CD4-positive, alpha-beta memory T cell (primary cell): ENCODE measurements at regions of chr2 and their contacts with region 1.

Region 1: DNA sequence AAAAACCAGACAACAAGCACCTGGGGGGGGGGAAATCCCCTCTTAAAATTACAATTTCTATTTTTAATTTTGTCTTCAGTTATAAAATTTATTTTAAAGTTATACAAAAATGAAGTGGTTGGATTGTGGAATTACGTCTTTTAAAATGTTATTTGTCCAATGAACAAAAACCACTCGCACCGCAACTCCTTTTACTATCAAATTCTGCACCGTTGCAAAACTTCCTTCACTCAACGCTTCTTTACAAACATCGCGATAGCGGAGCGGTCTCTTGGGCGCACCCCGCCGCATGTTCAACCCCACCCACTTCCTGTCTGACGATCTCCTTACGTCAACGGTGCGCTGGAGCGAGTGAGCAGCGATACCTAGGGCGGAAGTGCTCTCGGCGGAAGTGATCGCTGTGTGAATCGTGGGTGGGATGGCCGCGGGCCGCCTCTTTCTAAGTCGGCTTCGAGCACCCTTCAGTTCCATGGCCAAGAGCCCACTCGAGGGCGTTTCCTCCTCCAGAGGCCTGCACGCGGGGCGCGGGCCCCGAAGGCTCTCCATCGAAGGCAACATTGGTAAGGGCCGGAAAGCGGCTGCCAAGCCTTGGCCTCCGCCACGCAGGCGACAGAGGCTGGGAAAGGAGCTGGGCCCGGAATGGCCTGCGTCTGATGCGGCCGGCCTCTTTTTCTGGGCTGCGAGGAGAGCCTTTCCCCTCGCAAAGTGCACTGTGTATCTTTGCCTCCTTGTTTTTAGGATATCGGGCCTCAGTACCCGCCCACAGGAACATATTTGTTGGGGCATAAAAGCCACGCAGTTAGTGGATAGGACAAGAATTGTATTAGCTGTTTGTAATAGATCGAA is at the start of gene DGUOK:
- DNase-seq: peak; percentile 96 to 99 (median 98)
- H3K4me3 ChIP-seq: peak within 1 kb of the TSS; percentile 66 to 72
- H3K4me3 Mint-ChIP-seq: peak within 1 kb of the TSS; percentile 77 to 95 (median 92)
- H3K27ac ChIP-seq: peak within 1 kb of the TSS; percentile 97
- H3K27ac Mint-ChIP-seq: peak within 1 kb of the TSS; percentile 98 to 99 (median 99)
- H3K4me1 ChIP-seq: peaks cover 50% of the 10 kb centered on the region
- H3K4me1 Mint-ChIP-seq: peaks cover 38 to 55% (median 45%) of the 10 kb centered on the region in 4 donors
- H3K27me3 ChIP-seq: no peaks in the 10 kb centered on the region
- H3K27me3 Mint-ChIP-seq: no peaks in the 10 kb centered on the region
- total RNA-seq, gene DGUOK: 52.2 to 55.5 TPM

Region 2: DNA sequence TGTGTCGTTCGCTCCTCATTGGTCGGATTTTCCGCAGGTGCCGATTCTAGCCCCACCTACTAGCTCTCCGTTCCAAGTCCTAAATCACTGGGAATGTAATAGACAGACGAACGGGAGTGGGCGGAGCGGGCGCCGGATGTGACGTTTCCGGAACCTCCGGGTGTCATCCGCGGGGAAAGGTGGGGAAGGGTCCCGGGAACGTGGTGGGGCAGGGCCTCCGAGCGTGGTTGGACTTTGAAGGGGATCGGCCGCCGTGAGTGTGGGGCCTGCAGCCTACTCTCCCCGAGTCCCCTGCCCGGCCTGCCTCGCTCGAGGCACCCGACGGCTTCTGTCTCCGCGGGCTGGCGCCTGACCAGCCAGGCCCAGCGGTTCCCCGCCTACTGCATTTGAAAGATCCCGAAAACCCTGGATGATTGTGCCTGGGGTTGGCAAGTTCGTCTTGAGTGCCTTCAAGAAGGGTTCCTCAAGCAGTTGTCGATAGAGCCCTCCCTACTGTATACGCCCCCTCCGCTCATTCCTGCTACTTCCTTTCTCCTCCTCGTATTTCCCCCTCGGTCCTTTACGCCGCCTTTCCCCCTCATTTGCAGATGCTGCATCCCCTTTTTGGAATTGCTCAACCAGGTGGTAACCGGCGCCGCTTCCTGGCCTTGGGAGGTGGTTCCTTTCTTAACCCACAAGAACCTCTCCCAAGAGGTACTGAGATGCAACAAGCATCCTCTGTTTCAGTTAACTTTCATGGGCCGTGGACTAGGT is 97.7 kb before region 1 on chr2 and contains the start of gene STAMBP:
- CTCF ChIA-PET with region 1: no interaction called
- POLR2A ChIA-PET with region 1: interaction called, 4 read pairs
- intact Hi-C with region 1: loop called (anchors 1 kb)
- DNase-seq: peak; percentile 87 to 95 (median 91)
- H3K4me3 ChIP-seq: peak within 1 kb of the TSS; percentile 64 to 81
- H3K4me3 Mint-ChIP-seq: peak within 1 kb of the TSS; percentile 91 to 99 (median 96)
- H3K27ac ChIP-seq: peak within 1 kb of the TSS; percentile 92
- H3K27ac Mint-ChIP-seq: peak within 1 kb of the TSS; percentile 94 to 100 (median 98)
- H3K4me1 ChIP-seq: peaks cover 45% of the 10 kb centered on the region
- H3K4me1 Mint-ChIP-seq: peaks cover 34 to 49% (median 40%) of the 10 kb centered on the region in 4 donors
- H3K27me3 ChIP-seq: no peaks in the 10 kb centered on the region
- H3K27me3 Mint-ChIP-seq: no peaks in the 10 kb centered on the region
- total RNA-seq, gene STAMBP: 34.8 to 37.3 TPM

Region 3: DNA sequence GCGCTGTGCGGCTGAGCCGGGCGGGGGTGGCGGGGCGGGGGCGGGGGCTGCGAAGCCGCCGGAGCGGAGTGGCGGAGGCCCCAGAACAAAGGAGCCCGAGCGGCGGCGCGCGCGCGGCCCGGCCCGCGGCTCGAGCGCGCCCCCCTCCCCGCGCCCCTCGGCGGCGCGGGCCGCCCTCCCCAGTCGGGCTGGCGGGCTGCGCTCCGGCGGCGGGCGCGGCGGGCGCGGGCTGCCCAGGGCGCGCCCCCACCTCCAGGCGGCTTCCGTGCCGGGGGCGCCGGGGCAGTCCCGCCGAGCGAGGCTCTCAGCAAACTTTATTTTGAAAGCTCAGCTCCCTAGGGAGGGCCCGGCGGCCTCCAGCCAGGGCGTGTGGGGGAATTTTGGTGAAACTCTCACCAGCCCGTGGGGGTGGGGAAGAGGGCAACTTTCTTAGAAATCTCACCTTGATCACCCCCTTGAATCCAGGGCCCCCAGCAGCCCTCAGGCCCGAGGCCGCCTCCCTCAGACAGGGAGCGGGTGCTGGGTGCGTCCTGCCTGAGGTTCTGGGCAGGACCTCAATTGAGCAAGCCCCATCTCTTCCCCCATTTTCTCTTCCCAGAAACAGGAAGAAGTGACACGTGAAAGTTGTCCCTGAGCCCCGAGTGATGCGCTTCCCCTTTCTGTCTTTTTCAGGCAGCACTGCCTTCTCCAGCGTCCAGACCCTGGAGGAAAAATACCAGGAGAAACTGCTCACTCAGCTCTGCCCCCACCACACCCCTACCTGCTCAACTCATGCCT is 58.8 kb after region 1 on chr2:
- CTCF ChIA-PET with region 1: interaction called, 4 read pairs
- POLR2A ChIA-PET with region 1: interaction called, 27 read pairs
- intact Hi-C with region 1: loop called (anchors 1 kb)
- DNase-seq: peak in 4 of 5 donors; percentile 47 to 76 (median 52)
- H3K4me3 ChIP-seq: peak overlapping the region; percentile 52 to 73
- H3K4me3 Mint-ChIP-seq: peak overlapping the region; percentile 81 to 92 (median 84)
- H3K27ac ChIP-seq: peak overlapping the region; percentile 75
- H3K27ac Mint-ChIP-seq: peak overlapping the region; percentile 34 to 96 (median 87)
- H3K4me1 ChIP-seq: peaks cover 76% of the 10 kb centered on the region
- H3K4me1 Mint-ChIP-seq: peaks cover 59 to 85% (median 70%) of the 10 kb centered on the region in 4 donors
- H3K27me3 ChIP-seq: no peaks in the 10 kb centered on the region
- H3K27me3 Mint-ChIP-seq: no peaks in the 10 kb centered on the region

Region 4: DNA sequence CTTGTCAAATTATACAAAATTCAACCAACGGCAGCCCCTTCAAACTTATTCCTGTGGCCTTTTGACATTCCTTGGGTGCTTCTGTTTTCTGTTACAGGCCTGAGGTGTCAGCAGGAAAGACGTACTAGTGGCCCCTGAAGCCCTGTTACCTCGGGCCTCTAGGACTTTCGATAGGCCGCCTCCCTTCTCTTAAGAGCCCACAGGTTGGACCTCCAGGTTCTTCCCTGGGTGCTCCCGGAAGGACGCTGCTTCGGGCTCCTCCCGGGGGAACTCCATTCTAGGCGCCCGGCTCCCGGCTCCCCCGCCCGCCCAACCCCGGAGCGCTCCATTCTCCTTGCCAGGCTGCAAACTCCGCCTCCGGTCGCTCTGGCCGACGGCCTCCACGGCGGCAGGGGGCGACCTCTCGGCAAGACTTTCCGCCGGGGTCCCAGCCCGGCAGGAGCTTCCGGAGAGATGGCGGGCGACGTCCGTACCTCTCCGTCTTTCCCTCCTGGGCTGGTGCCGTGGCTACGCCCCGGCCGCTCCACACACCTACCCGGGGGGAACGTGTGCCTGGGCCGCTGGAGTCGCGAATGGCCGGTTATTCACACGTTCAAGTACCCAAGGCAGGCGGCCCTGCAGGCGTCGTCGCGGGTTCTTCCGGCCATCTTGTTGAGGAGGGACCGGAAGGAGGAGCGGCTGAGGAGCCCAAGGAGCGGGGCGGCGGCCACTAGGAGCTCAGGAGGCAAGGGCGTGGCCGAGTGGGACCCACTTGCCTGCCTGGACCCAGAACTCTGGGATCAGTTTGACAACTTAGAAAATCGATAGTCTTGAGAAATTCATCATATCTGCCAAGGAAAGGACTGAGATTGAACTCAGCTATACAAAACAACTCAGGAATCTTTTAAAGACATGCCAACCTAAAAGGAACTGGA is 193.5 kb after region 1 on chr2:
- CTCF ChIA-PET with region 1: interaction called, 4 read pairs
- POLR2A ChIA-PET with region 1: interaction called, 5 read pairs
- intact Hi-C with region 1: loop called (anchors 1 kb)
- DNase-seq: peak; percentile 79 to 85 (median 80)
- H3K4me3 ChIP-seq: peak overlapping the region; percentile 33 to 94
- H3K4me3 Mint-ChIP-seq: peak overlapping the region; percentile 85 to 92 (median 88)
- H3K27ac ChIP-seq: peak overlapping the region; percentile 70
- H3K27ac Mint-ChIP-seq: peak overlapping the region; percentile 79 to 97 (median 92)
- H3K4me1 ChIP-seq: no peaks in the 10 kb centered on the region
- H3K4me1 Mint-ChIP-seq: peaks cover 4 to 11% (median 7%) of the 10 kb centered on the region in 4 donors
- H3K27me3 ChIP-seq: no peaks in the 10 kb centered on the region
- H3K27me3 Mint-ChIP-seq: peaks cover 0 to under 1% of the 10 kb centered on the region in 2 donors

Region 5: DNA sequence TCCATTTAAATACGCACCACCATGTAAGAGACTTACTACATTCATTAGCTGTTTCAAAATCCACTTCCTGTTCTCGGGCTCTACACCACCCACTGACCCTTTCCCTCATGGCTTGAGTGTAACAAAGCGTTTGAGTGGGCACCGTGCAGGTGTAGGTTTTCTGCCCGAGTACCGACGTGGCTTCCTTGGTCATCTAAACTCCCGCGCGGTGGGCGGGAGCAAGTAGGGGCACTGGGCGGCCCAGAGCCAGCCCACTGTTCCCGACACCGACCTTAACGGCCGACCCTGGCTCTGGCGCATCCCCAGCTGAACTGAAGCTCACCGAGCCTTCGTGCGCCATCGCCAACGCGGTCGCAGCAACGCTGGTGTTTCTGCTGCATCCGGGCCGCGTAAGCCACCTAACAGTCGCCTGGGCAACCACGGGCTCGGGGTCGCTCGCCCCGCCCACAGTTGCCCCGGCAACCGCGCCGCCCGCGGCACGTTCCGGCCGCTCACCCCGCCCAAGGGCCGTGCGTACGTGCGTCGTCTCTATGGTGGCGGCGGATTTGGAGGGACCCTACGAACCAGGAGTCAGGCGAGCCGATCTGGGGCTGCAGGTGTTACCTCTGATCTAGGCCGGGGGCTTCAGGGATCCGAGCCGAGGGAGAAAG is 494.6 kb after region 1 on chr2 and contains the starts of genes C2orf81 and WDR54:
- CTCF ChIA-PET with region 1: no interaction called
- POLR2A ChIA-PET with region 1: interaction called, 3 read pairs
- intact Hi-C with region 1: loop called (anchors 1 kb)
- DNase-seq: peak; percentile 91 to 96 (median 95)
- H3K4me3 ChIP-seq: peak within 1 kb of the TSS; percentile 76 to 88
- H3K4me3 Mint-ChIP-seq: peak within 1 kb of the TSS; percentile 96 to 100 (median 98)
- H3K27ac ChIP-seq: peak within 1 kb of the TSS; percentile 93
- H3K27ac Mint-ChIP-seq: peak within 1 kb of the TSS; percentile 88 to 100 (median 99)
- H3K4me1 ChIP-seq: peaks cover 11% of the 10 kb centered on the region
- H3K4me1 Mint-ChIP-seq: peaks cover 12 to 30% (median 21%) of the 10 kb centered on the region in 4 donors
- H3K27me3 ChIP-seq: no peaks in the 10 kb centered on the region
- H3K27me3 Mint-ChIP-seq: no peaks in the 10 kb centered on the region
- total RNA-seq, gene C2orf81: 5.3 to 7.5 TPM
- total RNA-seq, gene WDR54: 36.3 to 41.0 TPM